ENCODE measurements at regions of chr17 and their contacts with region 1.

Region 1: GRCh38 chr17:78112518-78113226 is 15.9 kb downstream of the TMC6 start:
- DNase-seq: peak; percentile 68 to 97 (median 86)

Region 2: DNA sequence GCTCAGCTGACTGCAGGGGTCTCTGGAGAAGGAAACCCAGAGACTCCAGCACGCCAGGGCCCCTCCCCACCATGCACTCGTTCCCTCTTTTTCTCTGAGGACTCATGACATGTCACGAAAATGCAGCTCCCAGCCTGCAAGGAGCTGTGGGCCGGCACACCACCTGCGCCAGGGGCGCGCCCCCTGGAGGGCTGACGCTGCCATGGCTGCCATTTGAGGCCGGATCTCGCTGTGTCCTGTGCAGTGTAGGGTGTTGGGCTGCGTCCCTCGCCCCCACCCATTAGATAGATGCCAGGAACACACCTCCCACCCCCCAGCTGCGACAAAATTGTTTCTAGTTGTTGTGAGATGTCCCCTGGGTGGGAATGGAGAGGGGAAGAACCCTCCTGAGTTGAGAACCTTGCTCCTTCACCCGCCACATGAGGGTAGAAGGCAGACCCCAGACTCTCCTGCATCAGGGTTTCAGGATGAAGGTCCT is 63.9 kb after region 1 on chr17:
- intact Hi-C with region 1: loop called (anchors 2 kb)
- DNase-seq: peak; percentile 39 to 95 (median 68)